ENCODE measurements at regions of chrX and their contacts with region 1.

Region 1: DNA sequence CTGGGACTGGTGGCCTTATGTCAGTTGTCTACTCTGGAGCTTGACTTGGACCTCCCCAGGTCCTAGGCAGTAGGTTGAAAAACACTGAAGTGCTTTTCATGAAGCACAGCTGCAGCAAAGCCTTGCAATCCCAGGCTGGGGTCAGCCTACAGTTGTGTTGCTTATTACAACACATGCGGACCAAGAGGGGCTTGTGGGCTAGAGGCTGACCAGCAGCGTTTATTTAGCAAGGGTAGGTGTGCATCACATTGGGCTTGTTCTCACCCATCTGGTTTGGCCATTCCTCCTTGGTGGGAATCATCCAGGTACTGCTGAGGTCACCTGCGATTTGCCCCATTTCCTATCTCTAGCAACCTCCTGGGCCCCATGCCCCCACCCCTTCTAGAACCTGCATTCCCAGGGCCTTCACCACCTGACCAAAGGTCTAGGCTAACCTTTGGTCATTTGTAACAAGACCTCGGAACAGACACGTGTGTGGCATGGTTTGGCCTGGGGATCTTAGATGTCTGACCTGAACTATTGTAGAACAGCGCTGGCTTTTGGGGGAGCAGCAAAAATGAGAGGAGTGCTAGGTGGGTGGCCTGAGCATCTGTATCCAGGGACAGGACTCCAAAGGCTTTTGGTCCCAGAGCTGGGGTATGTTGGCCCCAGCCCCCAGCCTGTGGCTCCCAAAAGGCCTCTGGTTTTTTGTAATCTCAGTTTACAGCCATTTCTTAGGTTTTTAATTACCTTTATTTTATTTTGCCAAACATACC is 3.0 kb downstream of the RPL10 start:
- DNase-seq: peak in 2 of 3 donors; percentile 62 to 70
- ATAC-seq: peak; percentile 5 to 25 (median 16)
- H3K4me3 ChIP-seq: no peak overlapping the region
- H3K27ac ChIP-seq: peak overlapping the region in 1 of 3 donors; percentile 43
- H3K4me1 ChIP-seq: peaks cover 0 to 25% (median 6%) of the 10 kb centered on the region in 4 donors
- H3K27me3 ChIP-seq: no peaks in the 10 kb centered on the region
- CTCF ChIP-seq: no peak
- POLR2A ChIP-seq: no peak

Region 2: DNA sequence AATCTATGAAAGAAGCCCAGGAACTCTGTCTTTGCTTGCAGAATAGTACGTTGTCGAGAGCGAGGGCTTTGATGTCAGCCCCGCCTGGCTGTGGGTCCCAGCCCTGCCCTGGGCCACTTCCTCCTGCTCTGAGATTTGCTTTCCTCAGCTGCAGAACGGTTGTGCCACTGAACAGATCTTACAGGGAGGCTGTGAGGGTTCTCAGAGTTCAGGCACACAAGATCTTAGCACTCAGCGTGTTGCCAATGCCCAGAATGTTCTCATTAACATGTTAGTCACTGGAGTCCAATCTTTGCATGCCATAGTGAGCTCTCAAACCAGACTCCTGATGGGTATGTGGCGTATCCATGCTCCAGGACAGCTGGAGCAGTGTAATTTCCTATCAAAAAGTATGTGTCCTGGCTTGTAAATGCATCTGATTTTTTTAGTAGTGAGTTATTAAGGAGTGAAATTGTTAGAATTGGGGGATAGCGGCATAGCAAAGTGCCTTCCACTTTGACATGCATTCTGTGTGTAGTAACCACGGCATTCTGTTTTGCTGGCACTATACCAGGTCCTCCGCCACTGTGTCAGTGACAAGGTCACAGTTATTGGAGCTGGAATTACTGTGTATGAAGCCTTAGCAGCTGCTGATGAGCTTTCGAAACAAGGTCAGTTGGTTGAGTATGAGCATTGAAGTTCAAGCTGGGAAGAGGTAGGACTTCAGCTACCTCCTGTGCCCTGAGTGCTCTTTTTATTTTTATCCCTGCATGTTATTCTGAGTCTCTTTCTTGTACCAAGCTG is 74.0 kb before region 1 on chrX:
- intact Hi-C with region 1: no loop called
- DNase-seq: no peak
- ATAC-seq: peak in 3 of 4 donors; percentile 15 to 46 (median 34)
- H3K4me3 ChIP-seq: no peak overlapping the region
- H3K27ac ChIP-seq: no peak overlapping the region
- H3K4me1 ChIP-seq: no peaks in the 10 kb centered on the region
- H3K27me3 ChIP-seq: no peaks in the 10 kb centered on the region
- CTCF ChIP-seq: no peak
- POLR2A ChIP-seq: no peak

Region 3: GRCh38 chrX:154458114-154458953 is 57.1 kb after region 1 on chrX and contains the start of gene PLXNA3:
- intact Hi-C with region 1: no loop called
- DNase-seq: peak in 1 of 3 donors; percentile 58
- ATAC-seq: peak; percentile 48 to 78 (median 72)
- H3K4me3 ChIP-seq: peak within 1 kb of the TSS; percentile 36 to 65 (median 44)
- H3K27ac ChIP-seq: peak within 1 kb of the TSS in 1 of 3 donors; percentile 13
- H3K4me1 ChIP-seq: no peaks in the 10 kb centered on the region
- H3K27me3 ChIP-seq: no peaks in the 10 kb centered on the region
- CTCF ChIP-seq: no peak
- POLR2A ChIP-seq: peak; percentile 69
- total RNA-seq, gene PLXNA3: 1.3 to 22.8 (median 2.6) TPM

Region 4: GRCh38 chrX:154534862-154535670 is 133.8 kb after region 1 on chrX:
- intact Hi-C with region 1: loop called in 1 of 2 experiments (anchors 5 kb)
- DNase-seq: peak; percentile 87 to 96 (median 93)
- ATAC-seq: peak; percentile 97 to 100 (median 98)
- H3K4me3 ChIP-seq: no peak overlapping the region
- H3K27ac ChIP-seq: no peak overlapping the region
- H3K4me1 ChIP-seq: peaks cover 0 to 5% (median 0%) of the 10 kb centered on the region in 4 donors
- H3K27me3 ChIP-seq: no peaks in the 10 kb centered on the region
- CTCF ChIP-seq: peak; percentile 100
- POLR2A ChIP-seq: no peak

Region 5: GRCh38 chrX:154827194-154828015 is 426.2 kb after region 1 on chrX:
- intact Hi-C with region 1: no loop called
- DNase-seq: no peak
- ATAC-seq: peak in 3 of 4 donors; percentile 29 to 52 (median 48)
- H3K4me3 ChIP-seq: no peak overlapping the region
- H3K27ac ChIP-seq: no peak overlapping the region
- H3K4me1 ChIP-seq: no peaks in the 10 kb centered on the region
- H3K27me3 ChIP-seq: no peaks in the 10 kb centered on the region
- CTCF ChIP-seq: no peak
- POLR2A ChIP-seq: no peak

Measured in right lobe of liver (tissue), 6 donors.